Dendritic cell treated with granulocyte-macrophage colony-stimulating factor and Interleukin-4, amounts not matched to agents 40 ng/mL and 50 ng/mL, for 4 days (primary cell): ENCODE measurements at regions of chr2 and their contacts with region 1.

Region 1: GRCh38 chr2:65081232-65081685 is 25.0 kb downstream of the CEP68 start:
- H3K4me3 Mint-ChIP-seq: no peak overlapping the region
- H3K27ac Mint-ChIP-seq: peak overlapping the region; percentile 80
- H3K4me1 Mint-ChIP-seq: peaks cover 45% of the 10 kb centered on the region
- H3K27me3 Mint-ChIP-seq: no peaks in the 10 kb centered on the region

Region 2: DNA sequence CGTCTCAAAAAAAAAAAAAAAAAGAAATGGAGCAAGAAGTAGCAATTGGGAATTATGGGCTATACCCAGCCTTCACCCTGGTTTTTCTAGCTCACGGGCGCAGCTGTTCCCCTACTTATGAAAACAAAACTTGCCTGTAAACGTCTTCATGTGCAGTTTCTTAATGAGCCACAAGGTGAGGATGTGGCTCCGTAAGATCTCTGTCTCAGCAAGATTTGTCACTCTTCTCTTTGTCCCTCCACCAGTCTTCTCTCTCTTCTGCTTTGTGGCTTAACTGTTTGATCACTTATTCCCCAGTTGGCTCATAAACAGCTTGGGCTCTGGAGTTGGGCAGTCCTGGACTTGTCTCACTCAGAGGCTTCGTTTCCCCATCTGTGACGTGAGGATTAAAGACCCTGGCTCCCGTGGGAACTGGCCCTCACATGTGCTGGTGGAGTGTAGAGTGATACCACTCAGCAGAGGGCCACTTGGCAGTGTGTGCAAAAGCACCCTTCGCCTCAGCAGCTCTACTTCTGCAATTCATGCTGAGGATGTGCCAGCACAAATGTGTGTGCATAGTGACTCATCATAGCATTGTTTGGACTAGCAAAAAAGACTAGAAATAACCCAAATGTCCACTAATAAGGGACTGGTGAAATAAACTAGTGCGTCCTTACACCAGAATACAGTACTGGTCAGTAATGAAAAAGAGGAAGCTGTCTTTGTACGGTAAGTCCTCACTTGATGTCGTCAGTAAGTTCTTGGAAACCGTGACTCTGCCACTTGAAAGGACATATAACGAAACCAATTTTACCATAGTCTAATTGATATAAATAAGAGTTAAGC is 16.3 kb before region 1 on chr2:
- intact Hi-C with region 1: no loop called
- H3K4me3 Mint-ChIP-seq: peak overlapping the region; percentile 71
- H3K27ac Mint-ChIP-seq: peak overlapping the region; percentile 98
- H3K4me1 Mint-ChIP-seq: peaks cover 73% of the 10 kb centered on the region
- H3K27me3 Mint-ChIP-seq: no peaks in the 10 kb centered on the region

Region 3: DNA sequence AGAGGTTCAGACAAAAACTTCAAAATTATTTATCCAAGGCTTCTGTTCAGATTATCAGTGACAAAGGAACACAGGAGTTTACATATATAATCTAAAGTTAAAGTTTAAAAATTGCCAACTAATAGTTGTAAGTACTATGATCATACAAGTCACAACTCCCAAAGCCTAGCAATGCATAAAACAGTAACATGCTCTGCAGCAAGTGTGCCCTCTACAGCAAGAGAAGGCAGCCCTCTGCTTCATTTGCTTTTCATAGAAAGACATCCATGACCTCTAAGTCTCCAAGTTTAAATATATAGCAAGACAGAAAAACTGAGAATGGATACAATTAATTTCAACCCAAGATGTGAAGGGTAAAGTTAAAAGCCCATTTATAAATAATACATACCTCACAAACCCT is 35.4 kb after region 1 on chr2:
- intact Hi-C with region 1: loop called (anchors 5 kb)
- H3K4me3 Mint-ChIP-seq: no peak overlapping the region
- H3K27ac Mint-ChIP-seq: no peak overlapping the region
- H3K4me1 Mint-ChIP-seq: peaks cover 53% of the 10 kb centered on the region
- H3K27me3 Mint-ChIP-seq: no peaks in the 10 kb centered on the region

Region 4: GRCh38 chr2:65382776-65383357 is 301.6 kb after region 1 on chr2:
- intact Hi-C with region 1: no loop called
- H3K4me3 Mint-ChIP-seq: peak overlapping the region; percentile 24
- H3K27ac Mint-ChIP-seq: peak overlapping the region; percentile 65
- H3K4me1 Mint-ChIP-seq: peaks cover 62% of the 10 kb centered on the region
- H3K27me3 Mint-ChIP-seq: no peaks in the 10 kb centered on the region